B cell (primary cell): ENCODE measurements at regions of chr17 and their contacts with region 1.

Region 1: DNA sequence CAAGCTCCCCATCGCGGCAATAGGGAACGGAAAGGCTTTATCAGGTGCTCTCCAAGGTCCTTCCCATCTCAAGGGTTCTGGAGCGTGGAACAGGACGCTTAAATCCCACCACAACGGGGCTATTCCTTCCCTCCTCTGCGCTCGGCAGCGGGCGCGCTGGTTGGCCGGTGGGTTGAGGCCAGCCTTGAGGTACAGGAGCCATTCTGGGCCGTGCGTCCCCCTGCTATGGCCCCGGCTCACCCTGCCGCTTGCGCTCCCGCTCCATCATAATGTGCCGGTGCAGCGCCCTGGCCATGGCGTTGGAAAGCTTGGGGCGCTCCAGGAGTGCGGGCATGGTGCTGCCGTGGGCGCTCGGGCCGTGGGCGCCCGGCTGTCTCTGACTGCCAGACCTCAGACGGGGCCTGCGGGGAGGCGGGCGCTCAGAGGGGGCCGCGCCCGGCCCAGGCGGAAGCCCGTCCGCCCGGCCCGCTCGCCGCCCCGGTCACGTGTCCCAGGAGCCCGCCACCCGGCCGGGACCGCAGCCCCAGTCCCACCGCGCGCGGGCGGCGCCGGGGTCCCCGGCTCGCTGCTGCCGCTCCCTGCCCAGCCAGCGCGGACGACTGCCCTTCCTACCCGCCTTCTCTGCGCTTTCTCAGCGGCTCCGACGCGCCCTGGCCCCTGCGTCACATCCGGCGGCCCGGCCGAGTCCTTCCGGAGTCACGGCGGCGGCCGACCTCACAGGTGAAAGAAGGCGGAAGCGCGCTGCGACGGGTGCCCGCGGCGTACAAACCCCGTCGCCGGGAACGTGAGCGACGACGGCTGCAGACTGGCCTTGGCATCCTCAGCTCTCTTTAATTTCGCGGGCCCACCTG is at the start of gene GPS2:
- DNase-seq: peak; percentile 95
- ATAC-seq: peak; percentile 82
- H3K4me3 ChIP-seq: peak within 1 kb of the TSS; percentile 73 to 90 (median 82)
- H3K4me3 Mint-ChIP-seq: peak within 1 kb of the TSS; percentile 97
- H3K27ac ChIP-seq: peak within 1 kb of the TSS; percentile 78 to 91
- H3K27ac Mint-ChIP-seq: peak within 1 kb of the TSS; percentile 99
- H3K4me1 ChIP-seq: peaks cover 25 to 47% of the 10 kb centered on the region in 2 donors
- H3K4me1 Mint-ChIP-seq: peaks cover 55% of the 10 kb centered on the region
- H3K27me3 ChIP-seq: no peaks in the 10 kb centered on the region
- H3K27me3 Mint-ChIP-seq: no peaks in the 10 kb centered on the region
- CTCF ChIP-seq: no peak
- total RNA-seq, gene GPS2: 128 and 137 TPM in 2 replicates

Region 2: DNA sequence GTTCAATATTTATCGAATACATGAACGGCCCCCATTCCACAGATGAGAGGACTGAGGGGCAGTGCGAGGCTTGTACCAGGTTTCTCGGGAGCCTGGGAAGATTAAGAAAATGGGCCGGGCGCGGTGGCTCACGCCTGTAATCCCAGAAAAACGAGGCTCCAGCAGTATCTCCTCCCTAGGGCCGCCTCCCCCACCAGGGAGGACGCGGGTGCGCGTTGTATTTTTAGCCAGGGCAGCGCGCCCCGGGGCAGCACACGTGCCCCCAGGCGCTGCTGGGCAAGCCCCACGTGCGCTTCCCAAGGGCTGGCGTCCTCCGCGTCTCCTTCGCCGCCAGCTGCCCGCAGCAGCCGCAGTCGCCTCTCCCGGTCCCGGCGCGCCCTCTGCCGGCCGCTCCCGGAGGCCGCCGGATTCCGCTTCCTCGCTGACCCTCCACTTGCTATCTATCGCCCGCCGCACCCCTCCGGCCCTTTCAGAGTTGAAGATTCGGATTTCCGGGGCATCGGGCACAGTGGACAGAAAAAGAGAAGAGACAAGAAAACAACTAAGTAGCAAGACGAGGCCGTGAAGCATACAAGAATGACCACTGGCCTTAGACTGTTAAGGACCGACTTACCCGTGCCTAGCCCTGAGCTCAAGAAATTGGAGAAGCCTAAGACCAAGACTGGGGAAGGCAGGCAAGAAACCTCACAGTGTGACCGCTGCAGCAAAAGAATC is 18.6 kb before region 1 on chr17:
- CTCF ChIA-PET with region 1: interaction called, 19 read pairs
- POLR2A ChIA-PET with region 1: no interaction called
- intact Hi-C with region 1: no loop called
- DNase-seq: peak; percentile 84
- ATAC-seq: peak; percentile 58
- H3K4me3 ChIP-seq: peak overlapping the region in 2 of 5 experiments; percentile 12 to 14
- H3K4me3 Mint-ChIP-seq: peak overlapping the region; percentile 83
- H3K27ac ChIP-seq: no peak overlapping the region
- H3K27ac Mint-ChIP-seq: peak overlapping the region; percentile 47
- H3K4me1 ChIP-seq: peaks cover 28 to 30% of the 10 kb centered on the region in 2 donors
- H3K4me1 Mint-ChIP-seq: peaks cover 22% of the 10 kb centered on the region
- H3K27me3 ChIP-seq: peaks cover 0 to 52% (median 14%) of the 10 kb centered on the region in 4 experiments
- H3K27me3 Mint-ChIP-seq: peaks cover 36% of the 10 kb centered on the region
- CTCF ChIP-seq: peak; percentile 93

Region 3: DNA sequence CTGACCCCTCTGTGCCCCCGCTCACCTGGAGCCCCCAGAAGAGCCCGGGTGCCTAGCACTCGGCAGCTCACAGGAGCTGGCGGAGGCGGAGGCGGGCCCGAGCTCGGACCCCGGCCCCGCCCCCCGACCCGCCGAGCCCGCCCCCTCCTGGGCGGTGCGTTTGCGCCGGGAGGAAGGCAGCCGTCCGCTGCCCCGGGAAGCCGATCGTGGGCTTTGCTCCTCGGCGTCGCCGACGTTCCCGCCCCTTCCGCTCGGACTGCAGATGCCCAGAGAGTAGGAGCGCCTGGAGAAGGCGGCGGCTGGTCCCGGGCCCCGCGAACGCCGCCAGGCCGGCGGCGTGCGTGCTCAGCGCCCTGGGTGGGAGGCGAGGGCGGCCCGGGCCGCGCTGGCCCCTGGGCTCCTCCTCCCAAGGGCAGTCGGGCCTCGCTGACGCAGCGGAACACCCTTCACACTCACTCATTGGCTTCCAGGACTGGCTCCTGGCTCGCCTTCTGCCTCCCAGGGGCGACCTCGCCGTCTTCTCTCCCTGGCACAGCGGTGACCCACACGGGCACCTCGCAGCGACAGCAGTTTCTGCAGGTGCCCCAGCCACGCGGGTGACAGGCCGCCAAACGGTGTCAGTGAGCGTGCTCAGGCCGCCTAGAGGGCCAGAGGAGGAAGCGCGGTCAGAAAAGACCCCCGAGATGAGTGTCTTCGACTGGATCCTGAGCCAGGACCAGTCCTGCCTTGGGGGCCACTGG is 79.7 kb after region 1 on chr17 and contains the start of gene PLSCR3:
- CTCF ChIA-PET with region 1: no interaction called
- POLR2A ChIA-PET with region 1: interaction called, 11 read pairs
- intact Hi-C with region 1: no loop called
- DNase-seq: peak; percentile 90
- ATAC-seq: peak; percentile 89
- H3K4me3 ChIP-seq: peak within 1 kb of the TSS; percentile 31 to 84 (median 81)
- H3K4me3 Mint-ChIP-seq: peak within 1 kb of the TSS; percentile 96
- H3K27ac ChIP-seq: peak within 1 kb of the TSS; percentile 55 to 83
- H3K27ac Mint-ChIP-seq: peak within 1 kb of the TSS; percentile 95
- H3K4me1 ChIP-seq: peaks cover 12 to 16% of the 10 kb centered on the region in 2 donors
- H3K4me1 Mint-ChIP-seq: peaks cover 12% of the 10 kb centered on the region
- H3K27me3 ChIP-seq: no peaks in the 10 kb centered on the region
- H3K27me3 Mint-ChIP-seq: no peaks in the 10 kb centered on the region
- CTCF ChIP-seq: peak; percentile 20
- total RNA-seq, gene PLSCR3: 31.1 and 31.6 TPM in 2 replicates